GM10248 (cell line): ENCODE measurements at regions of chr10 and their contacts with region 1.

Region 1: DNA sequence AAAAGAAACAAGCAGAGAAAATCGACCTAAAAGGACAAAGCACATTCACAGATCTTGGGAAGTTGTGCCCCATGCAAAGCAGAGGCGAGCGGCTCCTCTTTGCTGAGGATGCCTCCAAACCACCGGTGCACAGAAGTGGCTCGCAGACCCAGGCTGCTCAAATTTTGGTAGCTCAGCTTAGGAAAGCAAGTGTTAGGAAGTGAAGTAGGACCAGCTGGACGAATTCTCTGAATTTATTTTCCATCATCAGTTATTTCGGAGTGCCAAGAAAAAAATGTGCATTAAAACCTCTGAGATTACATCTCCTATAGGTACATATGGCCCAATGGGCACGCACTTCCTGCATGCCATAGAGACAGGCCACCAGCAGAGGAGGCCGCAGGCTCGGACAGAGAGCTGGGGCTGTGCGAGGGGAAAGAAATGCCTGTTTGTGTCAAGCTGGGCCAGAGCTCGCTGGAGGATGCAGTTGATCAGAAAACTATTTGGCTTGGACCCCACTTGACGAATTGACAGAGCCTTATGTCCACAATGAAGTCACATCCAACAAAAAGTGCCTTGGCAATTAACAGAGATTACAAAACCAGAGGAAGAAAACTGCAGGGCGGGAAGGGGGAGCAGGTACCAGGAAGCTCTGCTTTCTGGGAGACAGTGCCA is 122.3 kb upstream of the LYZL2 start:
- DNase-seq: peak; percentile 61
- CTCF ChIP-seq: peak; percentile 72

Region 2: GRCh38 chr10:30502266-30503060 is 249.3 kb before region 1 on chr10:
- CTCF ChIA-PET with region 1: no interaction called
- POLR2A ChIA-PET with region 1: no interaction called
- DNase-seq: peak; percentile 61
- CTCF ChIP-seq: no peak

Region 3: DNA sequence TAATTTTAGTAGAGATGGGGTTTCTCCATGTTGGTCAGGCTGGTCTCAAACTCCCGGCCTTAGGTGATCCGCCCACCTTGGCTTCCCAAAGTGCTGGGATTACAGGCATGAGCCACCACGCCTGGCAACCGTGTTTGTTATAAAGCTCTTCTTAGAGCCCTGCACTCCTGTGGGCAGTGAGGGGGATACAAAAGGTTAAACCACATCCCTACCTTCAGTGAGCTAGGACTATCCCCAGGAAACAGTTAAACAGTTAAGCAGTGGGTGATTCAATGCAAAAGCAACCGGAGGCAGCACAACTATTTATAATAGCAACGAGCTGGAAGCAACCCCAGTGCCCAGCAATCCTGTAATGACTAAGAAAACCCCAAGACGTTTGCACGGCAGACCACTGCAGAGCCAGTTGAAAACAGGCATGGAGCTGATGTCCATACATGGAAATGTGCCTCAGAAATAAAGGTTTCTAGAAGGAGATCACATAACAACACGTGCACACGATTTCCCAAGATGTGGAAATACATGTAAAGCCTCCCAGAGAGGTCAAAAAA is 15.0 kb before region 1 on chr10:
- CTCF ChIA-PET with region 1: interaction called, 16 read pairs
- POLR2A ChIA-PET with region 1: no interaction called
- DNase-seq: peak; percentile 41
- CTCF ChIP-seq: no peak

Region 4: GRCh38 chr10:30763918-30764317 is 12.1 kb after region 1 on chr10:
- CTCF ChIA-PET with region 1: interaction called, 28 read pairs
- POLR2A ChIA-PET with region 1: no interaction called
- DNase-seq: no peak
- CTCF ChIP-seq: no peak

Region 5: GRCh38 chr10:30769361-30769760 is 17.6 kb after region 1 on chr10:
- CTCF ChIA-PET with region 1: interaction called, 28 read pairs
- POLR2A ChIA-PET with region 1: no interaction called
- DNase-seq: no peak
- CTCF ChIP-seq: no peak

Region 6: DNA sequence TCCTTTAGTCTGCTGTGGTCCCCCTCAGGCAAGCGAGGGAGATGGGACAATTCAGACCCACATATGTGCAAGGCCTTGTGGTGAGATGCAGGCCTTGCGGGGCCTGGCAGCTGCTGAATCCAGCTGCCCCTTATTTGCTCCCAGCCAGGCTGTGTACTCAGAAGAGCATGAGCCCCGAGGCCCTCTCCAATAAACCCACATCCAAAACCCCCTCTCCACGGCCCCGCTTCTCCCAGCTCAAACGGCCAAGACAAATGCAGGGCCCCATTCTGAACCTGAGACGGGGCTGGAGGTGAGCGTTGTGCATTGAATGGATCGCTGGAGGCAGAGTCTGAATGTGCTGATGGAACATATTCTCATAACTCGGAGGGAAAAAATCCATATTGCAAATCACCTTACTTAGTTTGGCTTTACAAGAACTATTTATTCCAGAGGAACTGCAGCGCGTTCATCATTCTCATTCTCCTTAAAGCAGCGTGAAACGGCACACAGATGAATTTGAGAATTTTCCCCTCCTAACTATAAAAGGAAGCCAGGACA is 46.9 kb after region 1 on chr10:
- CTCF ChIA-PET with region 1: no interaction called
- POLR2A ChIA-PET with region 1: no interaction called
- DNase-seq: no peak
- CTCF ChIP-seq: no peak

Region 7: DNA sequence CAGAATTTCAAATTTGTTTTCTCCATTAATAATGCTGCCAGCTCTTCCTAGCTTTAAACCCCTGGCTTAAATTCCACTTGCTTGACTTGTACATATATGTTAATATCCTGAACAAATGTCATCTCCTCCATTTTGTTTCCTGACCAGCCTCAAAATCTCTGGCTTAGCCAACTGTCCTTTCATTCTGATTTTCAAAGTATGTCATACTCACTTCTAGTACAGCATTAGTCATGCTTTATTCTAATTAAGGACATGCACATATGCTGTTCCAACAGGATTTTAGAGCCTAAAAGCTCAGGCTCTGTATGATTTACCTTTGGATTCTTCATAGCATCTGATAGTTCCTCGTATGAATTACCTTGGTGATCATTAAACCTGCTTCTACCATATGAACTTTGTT is 121.6 kb after region 1 on chr10:
- CTCF ChIA-PET with region 1: no interaction called
- POLR2A ChIA-PET with region 1: no interaction called
- DNase-seq: no peak
- CTCF ChIP-seq: no peak

Region 8: GRCh38 chr10:31808258-31809218 is 1056.7 kb after region 1 on chr10:
- CTCF ChIA-PET with region 1: interaction called, 14 read pairs
- POLR2A ChIA-PET with region 1: no interaction called
- DNase-seq: peak; percentile 36
- CTCF ChIP-seq: peak; percentile 34